ENCODE measurements at regions of chr11 and their contacts with region 1.

Region 1: GRCh38 chr11:115226556-115226955 is 277.7 kb downstream of the CADM1 start:
- H3K4me3 ChIP-seq: no peak overlapping the region
- H3K27ac ChIP-seq: no peak overlapping the region
- H3K4me1 ChIP-seq: no peaks in the 10 kb centered on the region
- CTCF ChIP-seq: no peak

Region 2: DNA sequence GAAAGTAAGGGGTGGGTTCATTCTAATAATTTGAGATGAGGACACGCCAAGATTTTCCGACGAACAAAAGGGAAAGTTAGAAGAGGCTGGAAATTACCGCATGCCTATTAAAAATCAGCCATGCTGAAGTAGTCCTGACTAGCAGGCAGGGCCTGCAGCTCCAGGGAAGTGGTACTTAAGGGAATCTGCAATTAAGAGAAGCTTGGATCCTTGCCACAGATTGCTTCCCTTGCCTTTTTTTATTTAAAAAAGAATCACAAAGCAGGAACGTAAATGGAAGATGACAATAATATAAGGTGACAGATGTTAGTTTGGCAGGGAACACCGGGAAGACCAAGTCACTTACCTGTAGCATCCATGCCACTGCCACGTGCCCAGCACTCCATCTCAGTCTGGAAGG is 81.6 kb before region 1 on chr11:
- CTCF ChIA-PET with region 1: no interaction called
- POLR2A ChIA-PET with region 1: no interaction called
- H3K4me3 ChIP-seq: no peak overlapping the region
- H3K27ac ChIP-seq: no peak overlapping the region
- H3K4me1 ChIP-seq: no peaks in the 10 kb centered on the region
- CTCF ChIP-seq: no peak

Region 3: DNA sequence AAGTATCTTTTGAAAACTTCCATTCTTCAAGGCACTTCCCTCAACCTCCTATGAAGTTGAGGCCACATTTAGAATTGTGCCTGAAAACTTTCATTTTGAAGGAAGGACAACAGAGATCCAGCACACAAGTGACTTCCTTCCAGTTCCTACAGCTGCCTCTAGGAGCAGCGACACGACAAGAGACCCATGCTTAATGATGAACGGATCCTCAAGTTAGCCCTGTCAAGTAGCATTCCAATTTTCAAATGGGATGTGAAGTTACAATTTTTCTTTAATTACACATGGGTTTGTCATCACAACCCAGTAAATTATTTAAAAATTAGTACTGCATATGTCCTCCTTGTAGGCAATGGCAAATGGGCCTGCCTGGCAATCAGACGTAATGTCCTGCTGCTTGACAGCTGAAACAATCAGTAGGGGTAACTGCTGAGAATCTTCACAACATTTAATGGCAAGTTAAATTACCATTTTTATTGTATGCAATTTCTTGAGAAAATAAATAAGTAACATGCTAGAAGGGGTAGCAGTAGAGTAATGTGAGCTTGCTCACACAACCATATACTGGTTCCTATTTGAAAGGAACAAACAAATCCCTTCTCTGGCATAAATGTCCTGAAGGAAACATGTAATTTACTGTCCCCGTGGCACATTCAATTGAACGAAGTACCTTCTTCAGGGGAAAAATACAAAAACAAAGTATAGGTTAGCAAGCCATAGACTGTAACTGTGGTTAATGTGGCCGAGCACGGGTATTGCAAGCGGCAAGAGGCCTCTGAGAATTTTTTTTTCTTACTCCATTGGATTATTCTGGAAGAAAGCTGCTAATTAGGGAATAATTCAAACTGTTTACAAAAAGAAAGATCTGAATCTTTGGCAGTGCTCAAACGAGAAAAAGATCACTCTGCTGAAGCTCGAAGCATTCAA is 10.6 kb before region 1 on chr11:
- CTCF ChIA-PET with region 1: interaction called, 15 read pairs
- POLR2A ChIA-PET with region 1: no interaction called
- H3K4me3 ChIP-seq: no peak overlapping the region
- H3K27ac ChIP-seq: no peak overlapping the region
- H3K4me1 ChIP-seq: 0 out of 2 replicates have a peak, but pooled peaks cover 3% of the 10 kb centered on the region
- CTCF ChIP-seq: no peak

Measured in HEK293 (cell line).